PC-3 (cell line): ENCODE measurements at regions of chr12 and their contacts with region 1.

Region 1: GRCh38 chr12:52980693-52981423 is 25.4 kb upstream of the EIF4B start:
- DNase-seq: peak; percentile 96
- ATAC-seq: peak; percentile 84
- H3K4me3 ChIP-seq: no peak overlapping the region
- H3K27ac ChIP-seq: no peak overlapping the region
- H3K4me1 ChIP-seq: no peaks in the 10 kb centered on the region; the same call in 1 of the 2 replicates
- H3K27me3 ChIP-seq: no peaks in the 10 kb centered on the region
- CTCF ChIP-seq: peak; percentile 99

Region 2: GRCh38 chr12:52582971-52583456 is 397.8 kb before region 1 on chr12:
- CTCF ChIA-PET with region 1: no interaction called
- POLR2A ChIA-PET with region 1: no interaction called
- intact Hi-C with region 1: loop called (anchors 10 kb)
- DNase-seq: peak; percentile 78
- ATAC-seq: peak; percentile 77
- H3K4me3 ChIP-seq: no peak overlapping the region
- H3K27ac ChIP-seq: no peak overlapping the region
- H3K4me1 ChIP-seq: peaks cover 8% of the 10 kb centered on the region; the same call in 1 of the 2 replicates
- H3K27me3 ChIP-seq: no peaks in the 10 kb centered on the region
- CTCF ChIP-seq: peak; percentile 79

Region 3: DNA sequence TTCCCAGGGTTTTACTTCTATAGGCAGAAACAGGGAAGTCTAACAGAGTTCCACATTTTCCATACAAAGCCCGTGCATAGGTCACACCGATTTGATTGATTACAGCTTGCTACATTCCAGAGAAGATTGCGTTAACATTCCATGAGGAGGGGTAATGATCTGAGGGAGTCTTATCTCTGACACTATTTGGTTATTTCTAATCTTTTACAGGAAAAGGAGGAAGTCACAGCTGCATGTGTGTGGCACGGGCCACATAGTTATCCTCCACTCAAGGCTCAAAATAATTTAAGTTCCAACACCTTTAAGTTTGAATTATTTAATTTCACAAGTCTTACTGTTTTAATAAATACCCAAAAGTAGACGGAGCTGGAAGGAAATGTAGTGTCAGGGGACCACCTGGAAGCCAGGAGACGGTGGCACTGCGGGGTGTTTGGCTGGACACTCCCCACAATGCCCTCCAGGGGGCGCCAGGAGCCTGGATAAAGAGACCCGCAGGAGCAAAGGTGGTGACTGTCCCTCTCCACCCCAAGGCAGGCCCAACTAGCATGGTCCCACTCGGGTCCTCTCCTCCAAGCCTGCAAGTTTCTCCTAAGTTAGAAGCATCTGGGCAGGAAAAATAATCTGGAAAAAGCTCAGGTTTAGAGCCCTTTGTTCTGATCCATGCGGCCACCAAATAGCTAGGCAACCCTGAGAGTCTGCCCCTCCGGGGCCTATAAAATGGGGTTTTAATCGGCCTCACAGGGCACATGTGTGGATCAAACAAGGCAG is 96.1 kb before region 1 on chr12:
- CTCF ChIA-PET with region 1: interaction called, 68 read pairs
- POLR2A ChIA-PET with region 1: interaction called, 3 read pairs
- intact Hi-C with region 1: loop called (anchors 1 kb)
- DNase-seq: peak; percentile 80
- ATAC-seq: peak; percentile 77
- H3K4me3 ChIP-seq: no peak overlapping the region
- H3K27ac ChIP-seq: no peak overlapping the region
- H3K4me1 ChIP-seq: no peaks in the 10 kb centered on the region
- H3K27me3 ChIP-seq: no peaks in the 10 kb centered on the region
- CTCF ChIP-seq: peak; percentile 96

Region 4: GRCh38 chr12:52924764-52925716 is 55.8 kb before region 1 on chr12:
- CTCF ChIA-PET with region 1: interaction called, 10 read pairs
- POLR2A ChIA-PET with region 1: interaction called, 4 read pairs
- intact Hi-C with region 1: no loop called
- DNase-seq: peak; percentile 89
- ATAC-seq: peak; percentile 52
- H3K4me3 ChIP-seq: peak overlapping the region; percentile 47
- H3K27ac ChIP-seq: peak overlapping the region; percentile 98
- H3K4me1 ChIP-seq: peaks cover 38% of the 10 kb centered on the region
- H3K27me3 ChIP-seq: no peaks in the 10 kb centered on the region
- CTCF ChIP-seq: no peak

Region 5: GRCh38 chr12:52942066-52942900 is 38.6 kb before region 1 on chr12:
- CTCF ChIA-PET with region 1: interaction called, 7 read pairs
- POLR2A ChIA-PET with region 1: no interaction called
- intact Hi-C with region 1: loop called (anchors 5 kb)
- DNase-seq: no peak
- ATAC-seq: no peak
- H3K4me3 ChIP-seq: no peak overlapping the region
- H3K27ac ChIP-seq: no peak overlapping the region
- H3K4me1 ChIP-seq: peaks cover 33% of the 10 kb centered on the region
- H3K27me3 ChIP-seq: no peaks in the 10 kb centered on the region
- CTCF ChIP-seq: no peak

Region 6: DNA sequence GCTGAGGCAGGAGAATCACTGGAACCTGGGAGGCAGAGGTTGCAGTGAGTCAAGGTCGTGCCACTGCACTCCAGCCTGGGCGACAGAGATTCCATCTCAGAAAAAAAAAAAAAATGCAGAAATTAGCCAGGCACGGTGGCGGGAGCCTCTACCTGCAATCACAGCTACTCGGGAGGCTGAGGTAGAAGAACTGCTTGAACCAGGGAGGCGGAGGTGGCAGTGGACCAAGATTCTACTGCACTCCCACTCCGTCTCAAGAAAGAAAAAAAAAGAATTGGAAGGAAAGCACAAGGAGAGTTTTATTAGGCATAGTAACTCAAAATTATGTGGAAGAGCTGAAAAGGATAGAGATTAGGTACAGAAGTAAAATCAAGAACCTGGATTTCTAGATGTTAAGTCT is 422.0 kb after region 1 on chr12:
- CTCF ChIA-PET with region 1: no interaction called
- POLR2A ChIA-PET with region 1: no interaction called
- intact Hi-C with region 1: no loop called
- DNase-seq: no peak
- ATAC-seq: no peak
- H3K4me3 ChIP-seq: no peak overlapping the region
- H3K27ac ChIP-seq: no peak overlapping the region
- H3K4me1 ChIP-seq: no peaks in the 10 kb centered on the region
- H3K27me3 ChIP-seq: no peaks in the 10 kb centered on the region
- CTCF ChIP-seq: no peak